Psoas muscle (tissue), 8 donors: ENCODE measurements at regions of chr1 and their contacts with region 1.

Region 1: GRCh38 chr1:117059678-117060440 is at the start of gene TTF2:
- DNase-seq: peak; percentile 89 to 92
- ATAC-seq: peak; percentile 100
- H3K4me3 ChIP-seq: peak within 1 kb of the TSS; percentile 86
- H3K27ac ChIP-seq: peak within 1 kb of the TSS; percentile 73
- H3K4me1 ChIP-seq: peaks cover 4% of the 10 kb centered on the region
- H3K27me3 ChIP-seq: no peaks in the 10 kb centered on the region
- CTCF ChIP-seq: no peak
- total RNA-seq, gene TTF2: 14.3 to 27.7 (median 17.1) TPM

Region 2: GRCh38 chr1:116570358-116571200 is 489.3 kb before region 1 on chr1 and contains the start of gene CD58:
- intact Hi-C with region 1: loop called (anchors 2 to 5 kb)
- DNase-seq: peak; percentile 90 to 93
- ATAC-seq: peak; percentile 91 to 95 (median 94)
- H3K4me3 ChIP-seq: peak within 1 kb of the TSS; percentile 90
- H3K27ac ChIP-seq: peak within 1 kb of the TSS; percentile 95
- H3K4me1 ChIP-seq: no peaks in the 10 kb centered on the region
- H3K27me3 ChIP-seq: no peaks in the 10 kb centered on the region
- CTCF ChIP-seq: peak; percentile 64
- total RNA-seq, gene CD58: 4.7 to 8.9 (median 5.4) TPM

Region 3: GRCh38 chr1:116737020-116737854 is 322.6 kb before region 1 on chr1:
- intact Hi-C with region 1: loop called (anchors 2 to 5 kb)
- DNase-seq: peak in 1 of 2 donors; percentile 39
- ATAC-seq: peak in 3 of 4 donors; percentile 39 to 61 (median 49)
- H3K4me3 ChIP-seq: no peak overlapping the region
- H3K27ac ChIP-seq: no peak overlapping the region
- H3K4me1 ChIP-seq: no peaks in the 10 kb centered on the region
- H3K27me3 ChIP-seq: no peaks in the 10 kb centered on the region
- CTCF ChIP-seq: peak; percentile 64

Region 4: DNA sequence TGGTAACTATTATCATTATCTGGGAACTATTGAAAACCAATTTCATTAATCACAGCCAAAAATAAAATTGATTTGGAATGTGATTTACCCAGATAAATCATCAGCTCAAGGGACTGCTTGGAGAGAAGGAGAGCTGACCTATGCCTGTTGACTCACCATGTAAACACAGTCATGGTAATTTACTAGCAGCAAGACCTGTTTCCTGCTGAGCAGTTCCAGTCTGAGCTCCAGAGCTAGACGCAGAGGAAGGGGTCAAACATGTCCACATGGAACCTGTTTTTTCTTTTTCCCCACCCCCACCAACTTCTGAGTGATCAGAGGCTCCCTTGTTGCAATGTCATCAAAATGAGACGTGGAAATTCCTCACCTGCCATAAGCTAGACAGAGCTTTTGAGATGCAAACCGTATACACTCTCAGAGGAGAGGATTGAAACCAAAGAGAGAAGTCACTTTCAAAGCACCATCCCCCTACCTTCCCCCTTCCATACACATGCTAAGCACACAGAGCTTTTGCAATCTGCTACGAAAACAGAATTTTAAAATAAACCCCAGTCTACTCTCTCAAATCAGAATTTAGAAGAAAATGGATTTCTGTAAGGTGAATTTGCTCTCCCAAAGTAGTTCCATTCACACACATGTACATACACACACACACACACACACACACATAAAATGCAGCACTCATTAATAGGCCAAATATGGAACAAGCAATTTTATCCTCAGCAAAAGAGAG is 206.0 kb before region 1 on chr1:
- intact Hi-C with region 1: loop called in 1 of 2 experiments (anchors 10 kb)
- DNase-seq: no peak
- ATAC-seq: no peak
- H3K4me3 ChIP-seq: no peak overlapping the region
- H3K27ac ChIP-seq: no peak overlapping the region
- H3K4me1 ChIP-seq: no peaks in the 10 kb centered on the region
- H3K27me3 ChIP-seq: peaks cover 0 to 1% (median 0%) of the 10 kb centered on the region in 3 donors
- CTCF ChIP-seq: no peak

Region 5: DNA sequence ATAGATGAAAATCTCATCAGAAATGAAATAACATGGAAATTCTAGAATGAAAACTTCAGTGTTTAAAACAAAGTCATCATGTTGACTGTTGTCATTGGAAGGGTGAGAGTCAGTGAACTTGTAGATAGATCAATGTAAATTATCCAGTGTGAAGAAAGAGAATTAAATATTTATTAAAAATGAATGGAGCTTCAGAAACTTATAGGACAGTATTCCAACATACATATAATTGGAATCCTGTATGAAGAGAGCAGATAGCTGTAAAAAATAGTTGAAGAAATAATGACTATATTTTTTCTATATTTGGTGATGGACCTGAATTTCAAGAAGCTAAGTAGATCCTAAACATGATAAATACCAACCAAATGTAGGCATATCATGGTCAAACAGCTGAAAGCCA is 367.4 kb after region 1 on chr1:
- intact Hi-C with region 1: no loop called
- DNase-seq: no peak
- ATAC-seq: no peak
- H3K4me3 ChIP-seq: no peak overlapping the region
- H3K27ac ChIP-seq: no peak overlapping the region
- H3K4me1 ChIP-seq: no peaks in the 10 kb centered on the region
- H3K27me3 ChIP-seq: no peaks in the 10 kb centered on the region
- CTCF ChIP-seq: no peak